ENCODE measurements at regions of chr10 and their contacts with region 1.

Region 1: DNA sequence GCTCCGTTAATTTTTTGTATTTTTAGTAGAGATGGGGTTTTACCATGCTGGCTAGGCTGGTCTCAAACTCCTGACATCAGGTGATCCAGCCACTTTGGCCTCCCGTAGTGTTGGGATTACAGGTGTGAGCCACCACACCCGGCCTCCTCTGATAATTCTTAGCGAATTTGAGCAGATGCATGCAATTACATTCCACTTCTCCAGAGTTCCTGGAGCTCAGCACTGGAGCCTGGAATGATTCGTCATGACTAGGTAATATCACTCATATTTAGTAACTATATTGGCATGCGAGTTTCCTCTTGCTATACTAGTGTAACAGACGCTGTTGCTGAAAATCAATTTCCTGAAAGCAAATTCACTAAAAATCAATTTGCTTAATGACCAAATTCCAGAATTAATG is 86.8 kb downstream of the MKX start:
- DNase-seq: peak in 1 of 2 donors; percentile 25
- H3K4me3 ChIP-seq: no peak overlapping the region
- CTCF ChIP-seq: no peak
- POLR2A ChIP-seq: no peak

Region 2: GRCh38 chr10:27446091-27446918 is 212.5 kb before region 1 on chr10:
- intact Hi-C with region 1: loop called (anchors 5 kb)
- DNase-seq: no peak
- H3K4me3 ChIP-seq: no peak overlapping the region
- CTCF ChIP-seq: no peak
- POLR2A ChIP-seq: no peak

Region 3: GRCh38 chr10:27558612-27559020 is 100.2 kb before region 1 on chr10:
- intact Hi-C with region 1: loop called (anchors 10 kb)
- DNase-seq: peak in 1 of 2 donors; percentile 24
- H3K4me3 ChIP-seq: no peak overlapping the region
- CTCF ChIP-seq: peak in 1 of 3 donors; percentile 25
- POLR2A ChIP-seq: no peak

Region 4: GRCh38 chr10:27646224-27647175 is 12.3 kb before region 1 on chr10:
- intact Hi-C with region 1: no loop called
- DNase-seq: no peak
- H3K4me3 ChIP-seq: no peak overlapping the region
- CTCF ChIP-seq: no peak
- POLR2A ChIP-seq: no peak

Region 5: DNA sequence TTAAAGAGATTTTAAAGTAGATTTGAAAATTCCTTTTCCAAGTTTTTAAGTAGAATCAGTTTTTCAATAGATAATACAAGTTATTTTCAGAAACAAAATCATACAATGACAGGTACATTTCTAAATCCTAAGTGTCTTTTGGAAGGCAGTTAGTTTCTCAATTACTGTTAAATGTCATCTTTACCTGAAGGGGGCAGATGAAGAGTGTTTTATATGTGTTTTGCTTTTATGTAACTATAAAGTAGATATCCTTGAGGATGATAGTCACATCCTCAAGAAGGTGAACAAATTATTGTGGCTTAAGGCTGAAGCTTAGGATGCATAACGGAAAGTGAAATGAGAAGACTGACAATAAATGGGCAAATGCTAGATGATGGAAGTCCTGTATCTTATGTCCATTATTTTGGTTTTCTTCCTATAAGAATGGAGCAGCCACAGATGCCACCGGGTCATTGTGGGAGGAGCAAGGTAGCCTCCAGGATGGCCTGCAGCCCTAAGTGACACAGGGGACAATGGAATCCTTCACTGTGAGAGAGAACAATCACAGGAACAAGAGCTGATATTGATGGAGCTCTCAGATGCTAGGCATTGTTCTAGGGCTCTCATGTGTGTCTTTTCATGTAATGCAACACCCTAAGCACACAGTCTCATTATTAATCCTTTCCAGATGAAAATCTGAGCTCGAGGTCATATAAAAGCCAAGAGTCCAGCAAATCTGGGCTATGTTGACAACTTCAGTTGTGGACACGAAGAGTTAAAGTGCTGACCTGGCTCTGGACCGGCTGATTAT is 100.9 kb after region 1 on chr10:
- intact Hi-C with region 1: no loop called
- DNase-seq: no peak
- H3K4me3 ChIP-seq: no peak overlapping the region
- CTCF ChIP-seq: no peak
- POLR2A ChIP-seq: no peak

Measured in lower leg skin (tissue), 4 donors.